ENCODE measurements at regions of chr2 and their contacts with region 1.

Region 1: DNA sequence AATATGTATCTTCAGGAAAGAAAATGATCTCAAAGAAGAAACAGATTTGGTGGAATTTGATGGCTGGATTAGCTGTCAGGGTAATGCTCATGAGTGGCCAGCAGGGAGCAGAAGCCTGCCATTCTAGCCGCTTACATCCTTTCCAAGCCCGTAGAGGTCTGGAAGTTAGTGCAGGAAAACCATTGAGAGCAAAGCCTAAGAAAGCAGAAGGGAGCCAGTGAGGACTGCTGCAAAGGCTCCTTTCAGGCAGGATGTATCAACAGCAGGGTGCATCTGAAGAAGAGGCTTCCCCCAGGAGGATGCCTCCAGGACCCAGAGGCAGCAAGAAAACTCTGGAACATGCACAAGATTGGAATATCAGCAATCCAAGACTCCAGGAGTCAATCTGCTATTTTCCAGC is 22.9 kb upstream of the LBH start:
- DNase-seq: peak; percentile 56
- H3K4me3 Mint-ChIP-seq: no peak overlapping the region
- H3K27ac Mint-ChIP-seq: no peak overlapping the region
- H3K4me1 Mint-ChIP-seq: peaks cover 13% of the 10 kb centered on the region
- H3K27me3 Mint-ChIP-seq: no peaks in the 10 kb centered on the region

Region 2: DNA sequence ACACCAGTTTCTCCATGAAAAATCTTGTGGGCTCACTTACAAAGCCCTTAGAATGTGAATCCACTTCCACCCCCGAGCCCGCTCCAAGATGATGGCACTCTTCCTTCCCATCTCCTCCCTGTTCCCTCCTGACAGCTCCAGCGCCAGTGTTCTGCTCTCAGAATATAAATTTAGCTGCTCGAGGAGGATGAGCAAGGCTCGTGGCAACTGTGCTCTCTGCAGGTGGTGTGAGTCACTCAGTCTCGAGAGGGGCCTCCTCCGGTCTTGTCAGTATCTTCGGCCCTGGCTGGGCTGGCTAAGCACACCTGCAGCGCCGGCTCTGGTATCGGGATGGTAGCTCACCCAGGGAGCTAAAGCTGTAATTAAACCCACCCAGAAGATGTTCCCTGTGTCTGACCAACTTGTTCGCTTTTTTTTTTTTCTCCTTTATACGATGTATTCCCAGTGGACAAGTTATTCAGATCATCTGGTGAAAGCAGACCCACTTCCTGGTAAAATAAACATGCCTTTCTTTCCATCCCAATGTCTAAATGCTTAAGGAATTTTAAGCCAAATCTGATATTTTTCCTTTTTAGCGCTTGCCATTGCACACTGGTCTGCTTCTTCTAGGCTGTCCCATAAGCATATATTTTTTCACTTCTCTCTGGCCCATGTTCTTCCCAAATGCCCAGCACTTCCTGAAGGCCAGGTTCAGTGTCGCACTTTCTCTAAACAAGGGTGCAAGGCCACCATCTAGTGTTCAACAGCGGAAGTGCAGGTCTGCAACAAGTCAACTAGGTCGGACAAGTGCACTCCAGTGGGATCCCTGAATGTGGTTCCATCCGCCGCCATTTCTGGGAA is 93.1 kb before region 1 on chr2:
- CTCF ChIA-PET with region 1: no interaction called
- POLR2A ChIA-PET with region 1: no interaction called
- intact Hi-C with region 1: no loop called
- DNase-seq: peak; percentile 78
- H3K4me3 Mint-ChIP-seq: no peak overlapping the region
- H3K27ac Mint-ChIP-seq: no peak overlapping the region
- H3K4me1 Mint-ChIP-seq: peaks cover 4% of the 10 kb centered on the region
- H3K27me3 Mint-ChIP-seq: peaks cover 2% of the 10 kb centered on the region

Region 3: GRCh38 chr2:30231212-30231995 is 23.0 kb after region 1 on chr2 and contains the start of gene LBH:
- CTCF ChIA-PET with region 1: interaction called, 31 read pairs
- POLR2A ChIA-PET with region 1: interaction called, 4 read pairs
- intact Hi-C with region 1: loop called (anchors 2 kb)
- DNase-seq: peak; percentile 94
- H3K4me3 Mint-ChIP-seq: peak within 1 kb of the TSS; percentile 84
- H3K27ac Mint-ChIP-seq: peak within 1 kb of the TSS; percentile 94
- H3K4me1 Mint-ChIP-seq: peaks cover 63% of the 10 kb centered on the region
- H3K27me3 Mint-ChIP-seq: no peaks in the 10 kb centered on the region
- total RNA-seq, gene LBH: 109 to 112 TPM

Region 4: DNA sequence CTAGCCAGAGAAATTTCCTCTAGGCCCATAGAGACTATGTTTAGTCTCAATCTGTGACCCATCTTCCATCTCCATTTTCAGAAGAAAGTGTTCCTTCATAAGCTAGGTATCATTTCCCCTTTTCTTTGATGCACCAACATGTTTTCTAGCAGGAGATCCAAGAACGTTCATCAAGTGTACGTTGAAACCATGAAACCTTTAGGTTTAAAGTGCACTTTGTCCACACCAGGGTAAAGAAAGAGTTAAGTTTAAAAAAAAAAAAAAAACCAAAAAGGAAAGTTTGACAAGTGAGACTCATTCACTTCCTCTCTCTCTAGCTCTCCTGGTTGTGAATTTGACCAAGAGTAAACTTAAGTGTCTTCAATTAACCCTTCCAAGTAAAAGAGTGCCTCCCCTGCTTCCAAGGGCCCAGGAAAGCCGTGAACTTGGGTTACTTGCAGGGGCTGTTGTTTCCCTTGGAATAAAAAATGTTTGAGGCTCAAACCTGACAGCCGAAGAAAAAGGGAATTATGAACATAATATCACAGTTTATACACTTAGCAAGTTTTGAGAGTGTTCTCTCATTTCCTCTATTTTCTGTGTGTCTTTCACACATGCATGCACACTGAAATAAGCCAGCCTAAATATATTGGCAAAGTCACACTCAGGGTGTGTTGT is 79.5 kb after region 1 on chr2:
- CTCF ChIA-PET with region 1: no interaction called
- POLR2A ChIA-PET with region 1: no interaction called
- intact Hi-C with region 1: no loop called
- DNase-seq: no peak
- H3K4me3 Mint-ChIP-seq: no peak overlapping the region
- H3K27ac Mint-ChIP-seq: no peak overlapping the region
- H3K4me1 Mint-ChIP-seq: peaks cover 18% of the 10 kb centered on the region
- H3K27me3 Mint-ChIP-seq: no peaks in the 10 kb centered on the region

Region 5: DNA sequence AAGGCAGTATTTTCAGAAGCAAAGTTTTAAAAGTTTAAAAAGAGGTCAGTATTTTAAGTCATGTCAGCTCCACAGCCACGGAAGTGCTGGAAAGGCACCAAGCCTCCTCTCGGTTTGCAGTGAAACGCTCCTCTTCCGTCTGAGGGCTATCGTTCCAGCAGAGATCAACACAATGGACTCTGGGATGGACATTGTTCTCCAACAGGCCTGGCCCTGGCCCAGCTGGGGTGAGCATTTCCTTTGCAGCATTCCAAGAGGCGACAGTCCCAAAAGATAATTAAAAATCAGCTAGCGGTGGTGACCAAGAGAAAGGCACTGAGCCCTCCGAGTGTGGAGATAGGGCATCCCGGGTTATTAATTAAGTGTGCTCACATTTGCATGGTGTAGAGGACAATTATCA is 142.7 kb after region 1 on chr2:
- CTCF ChIA-PET with region 1: no interaction called
- POLR2A ChIA-PET with region 1: no interaction called
- intact Hi-C with region 1: no loop called
- DNase-seq: no peak
- H3K4me3 Mint-ChIP-seq: no peak overlapping the region
- H3K27ac Mint-ChIP-seq: no peak overlapping the region
- H3K4me1 Mint-ChIP-seq: peaks cover 18% of the 10 kb centered on the region
- H3K27me3 Mint-ChIP-seq: no peaks in the 10 kb centered on the region

Region 6: DNA sequence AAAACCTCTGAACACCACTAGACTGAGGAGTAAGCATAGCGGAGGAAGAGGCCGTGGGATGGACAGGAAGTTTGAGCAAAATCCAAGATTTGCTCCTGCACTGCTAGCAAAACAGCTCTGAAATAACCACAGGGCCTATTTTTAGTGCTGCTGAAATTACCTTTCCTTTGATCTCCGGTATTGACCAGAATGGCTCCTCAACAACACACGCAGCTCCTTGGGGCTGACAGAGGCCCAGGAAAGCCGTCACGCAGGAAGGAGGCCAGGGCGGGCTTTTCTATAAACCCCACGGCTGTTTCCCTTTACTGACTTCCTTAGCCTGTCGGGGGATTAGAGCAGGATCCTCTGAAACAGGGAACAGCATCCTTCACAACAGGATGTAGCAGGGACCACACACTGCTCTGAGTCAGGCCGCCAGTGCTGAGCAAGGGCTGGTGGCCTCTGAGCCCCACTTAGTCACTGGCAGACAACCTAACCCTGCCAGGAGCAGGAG is 157.8 kb after region 1 on chr2:
- CTCF ChIA-PET with region 1: interaction called, 12 read pairs
- POLR2A ChIA-PET with region 1: no interaction called
- intact Hi-C with region 1: no loop called
- DNase-seq: peak; percentile 73
- H3K4me3 Mint-ChIP-seq: no peak overlapping the region
- H3K27ac Mint-ChIP-seq: peak overlapping the region; percentile 46
- H3K4me1 Mint-ChIP-seq: peaks cover 35% of the 10 kb centered on the region
- H3K27me3 Mint-ChIP-seq: no peaks in the 10 kb centered on the region

Region 7: GRCh38 chr2:30475542-30475941 is 267.1 kb after region 1 on chr2:
- CTCF ChIA-PET with region 1: interaction called, 3 read pairs
- POLR2A ChIA-PET with region 1: no interaction called
- intact Hi-C with region 1: loop called (anchors 5 kb)
- DNase-seq: no peak
- H3K4me3 Mint-ChIP-seq: no peak overlapping the region
- H3K27ac Mint-ChIP-seq: no peak overlapping the region
- H3K4me1 Mint-ChIP-seq: peaks cover 27% of the 10 kb centered on the region
- H3K27me3 Mint-ChIP-seq: no peaks in the 10 kb centered on the region

Region 8: DNA sequence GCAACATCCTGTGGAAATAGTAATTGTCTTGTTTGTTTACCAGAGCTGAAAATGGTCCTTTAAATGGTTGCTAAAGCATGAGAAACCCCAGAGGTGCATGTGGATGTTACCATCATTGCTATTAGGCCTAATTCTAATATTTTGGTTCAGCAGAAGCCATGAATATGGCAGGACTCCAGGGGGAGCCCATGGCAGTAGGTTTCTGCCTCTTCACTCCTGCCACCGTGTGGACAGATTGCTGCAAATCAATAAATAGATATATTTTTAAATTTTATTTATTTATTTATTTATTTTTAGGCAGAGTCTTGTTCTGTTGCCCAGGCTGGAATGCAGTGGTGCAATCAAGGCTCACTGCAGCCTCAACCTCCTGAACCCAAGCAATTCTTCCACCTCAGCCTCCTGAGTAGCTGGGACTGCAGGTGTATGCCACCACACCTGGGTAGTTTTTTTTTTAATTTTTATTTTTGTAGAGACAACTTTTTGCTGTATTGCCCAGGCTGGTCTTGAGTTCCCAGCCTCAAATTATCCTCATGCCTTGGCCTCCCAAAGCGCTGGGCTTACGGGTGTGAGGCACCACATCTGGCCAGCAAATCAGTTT is 653.7 kb after region 1 on chr2:
- CTCF ChIA-PET with region 1: interaction called, 3 read pairs
- POLR2A ChIA-PET with region 1: no interaction called
- intact Hi-C with region 1: loop called (anchors 10 kb)
- DNase-seq: peak; percentile 45
- H3K4me3 Mint-ChIP-seq: no peak overlapping the region
- H3K27ac Mint-ChIP-seq: no peak overlapping the region
- H3K4me1 Mint-ChIP-seq: peaks cover 8% of the 10 kb centered on the region
- H3K27me3 Mint-ChIP-seq: peaks cover 3% of the 10 kb centered on the region